Naive thymus-derived CD4-positive, alpha-beta T cell (primary cell): ENCODE measurements at regions of chr9 and their contacts with region 1.

Region 1: GRCh38 chr9:89597711-89598625 is 6.8 kb upstream of the GADD45G start:
- DNase-seq: peak in 8 of 9 donors; percentile 26 to 58 (median 48)
- ATAC-seq: peak; percentile 65
- H3K4me3 ChIP-seq: no peak overlapping the region
- H3K4me3 Mint-ChIP-seq: no peak overlapping the region
- H3K27ac ChIP-seq: no peak overlapping the region
- H3K27ac Mint-ChIP-seq: no peak overlapping the region
- H3K4me1 ChIP-seq: peaks cover 0 to 2% of the 10 kb centered on the region in 2 donors
- H3K4me1 Mint-ChIP-seq: peaks cover 0 to 5% (median 2%) of the 10 kb centered on the region in 7 donors
- H3K27me3 ChIP-seq: no peaks in the 10 kb centered on the region
- H3K27me3 Mint-ChIP-seq: peaks cover 0 to 39% (median 0%) of the 10 kb centered on the region in 5 donors

Region 2: GRCh38 chr9:89542401-89543021 is 55.5 kb before region 1 on chr9:
- CTCF ChIA-PET with region 1: no interaction called
- POLR2A ChIA-PET with region 1: no interaction called
- intact Hi-C with region 1: no loop called
- DNase-seq: no peak
- ATAC-seq: no peak
- H3K4me3 ChIP-seq: no peak overlapping the region
- H3K4me3 Mint-ChIP-seq: peak overlapping the region in 4 of 10 donors; percentile 5 to 27 (median 12)
- H3K27ac ChIP-seq: no peak overlapping the region
- H3K27ac Mint-ChIP-seq: peak overlapping the region in 6 of 9 donors; percentile 10 to 86 (median 44)
- H3K4me1 ChIP-seq: peaks cover 28 to 61% of the 10 kb centered on the region in 2 donors
- H3K4me1 Mint-ChIP-seq: peaks cover 27 to 83% (median 77%) of the 10 kb centered on the region in 7 donors
- H3K27me3 ChIP-seq: no peaks in the 10 kb centered on the region
- H3K27me3 Mint-ChIP-seq: no peaks in the 10 kb centered on the region

Region 3: GRCh38 chr9:89919169-89919681 is 321.3 kb after region 1 on chr9:
- CTCF ChIA-PET with region 1: interaction called, 10 read pairs
- POLR2A ChIA-PET with region 1: no interaction called
- intact Hi-C with region 1: loop called (anchors 1 kb)
- DNase-seq: peak in 8 of 9 donors; percentile 14 to 53 (median 23)
- ATAC-seq: peak; percentile 77
- H3K4me3 ChIP-seq: no peak overlapping the region
- H3K4me3 Mint-ChIP-seq: peak overlapping the region in 3 of 10 donors; percentile 10 to 48 (median 17)
- H3K27ac ChIP-seq: no peak overlapping the region
- H3K27ac Mint-ChIP-seq: peak overlapping the region in 1 of 9 donors; percentile 15
- H3K4me1 ChIP-seq: no peaks in the 10 kb centered on the region
- H3K4me1 Mint-ChIP-seq: peaks cover 4 to 14% (median 8%) of the 10 kb centered on the region in 7 donors
- H3K27me3 ChIP-seq: no peaks in the 10 kb centered on the region
- H3K27me3 Mint-ChIP-seq: peaks cover 0 to 17% (median 7%) of the 10 kb centered on the region in 5 donors

Region 4: GRCh38 chr9:90142580-90142979 is 544.6 kb after region 1 on chr9:
- CTCF ChIA-PET with region 1: interaction called, 3 read pairs
- POLR2A ChIA-PET with region 1: no interaction called
- intact Hi-C with region 1: loop called (anchors 1 kb)
- DNase-seq: peak in 7 of 9 donors; percentile 17 to 64 (median 49)
- ATAC-seq: peak; percentile 49
- H3K4me3 ChIP-seq: no peak overlapping the region
- H3K4me3 Mint-ChIP-seq: no peak overlapping the region
- H3K27ac ChIP-seq: no peak overlapping the region
- H3K27ac Mint-ChIP-seq: no peak overlapping the region
- H3K4me1 ChIP-seq: no peaks in the 10 kb centered on the region
- H3K4me1 Mint-ChIP-seq: peaks cover 0 to 6% (median 5%) of the 10 kb centered on the region in 7 donors
- H3K27me3 ChIP-seq: no peaks in the 10 kb centered on the region
- H3K27me3 Mint-ChIP-seq: peaks cover 23 to 59% (median 28%) of the 10 kb centered on the region in 5 donors

Region 5: GRCh38 chr9:90870621-90871326 is 1272.8 kb after region 1 on chr9:
- CTCF ChIA-PET with region 1: interaction called, 3 read pairs
- POLR2A ChIA-PET with region 1: no interaction called
- intact Hi-C with region 1: loop called in 1 of 2 experiments (anchors 1 kb)
- DNase-seq: peak in 5 of 9 donors; percentile 32 to 50 (median 44)
- ATAC-seq: peak; percentile 60
- H3K4me3 ChIP-seq: no peak overlapping the region
- H3K4me3 Mint-ChIP-seq: no peak overlapping the region
- H3K27ac ChIP-seq: no peak overlapping the region
- H3K27ac Mint-ChIP-seq: no peak overlapping the region
- H3K4me1 ChIP-seq: no peaks in the 10 kb centered on the region
- H3K4me1 Mint-ChIP-seq: no peaks in the 10 kb centered on the region
- H3K27me3 ChIP-seq: peaks cover 0 to 2% of the 10 kb centered on the region in 2 donors
- H3K27me3 Mint-ChIP-seq: peaks cover 0 to 26% (median 6%) of the 10 kb centered on the region in 5 donors